Sigmoid colon (tissue), 7 donors: ENCODE measurements at regions of chr2 and their contacts with region 1.

Region 1: GRCh38 chr2:137910641-137911040 is 53.6 kb upstream of the HNMT start:
- DNase-seq: no peak
- H3K4me3 ChIP-seq: no peak overlapping the region
- H3K27ac ChIP-seq: no peak overlapping the region
- H3K4me1 ChIP-seq: no peaks in the 10 kb centered on the region
- H3K27me3 ChIP-seq: no peaks in the 10 kb centered on the region
- CTCF ChIP-seq: peak in 2 of 4 experiments; percentile 42 to 59
- EP300 ChIP-seq: no peak
- POLR2A ChIP-seq: no peak

Region 2: DNA sequence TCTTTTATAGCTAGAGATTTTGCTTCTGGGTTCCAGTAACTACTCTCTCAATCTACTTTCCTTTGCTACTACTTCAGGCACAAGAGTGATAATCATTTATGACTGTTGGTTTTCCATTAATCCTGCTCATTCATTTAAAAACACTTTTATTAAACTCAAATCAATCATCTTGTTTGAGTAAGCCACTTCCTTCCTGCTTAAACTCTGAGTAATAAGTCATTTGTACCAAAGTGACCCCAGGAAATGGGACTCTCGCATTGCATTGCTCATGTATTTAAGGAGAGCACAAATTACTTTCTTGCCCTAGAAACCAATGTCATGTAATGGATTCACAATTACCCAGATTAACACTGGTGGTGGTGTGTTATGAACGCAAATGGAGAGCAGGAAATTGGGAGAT is 217.1 kb before region 1 on chr2:
- intact Hi-C with region 1: no loop called
- DNase-seq: no peak
- H3K4me3 ChIP-seq: no peak overlapping the region
- H3K27ac ChIP-seq: no peak overlapping the region
- H3K4me1 ChIP-seq: no peaks in the 10 kb centered on the region
- H3K27me3 ChIP-seq: no peaks in the 10 kb centered on the region
- CTCF ChIP-seq: no peak
- EP300 ChIP-seq: no peak
- POLR2A ChIP-seq: no peak

Region 3: GRCh38 chr2:137865954-137866540 is 44.6 kb before region 1 on chr2:
- intact Hi-C with region 1: no loop called
- DNase-seq: no peak
- H3K4me3 ChIP-seq: no peak overlapping the region
- H3K27ac ChIP-seq: no peak overlapping the region
- H3K4me1 ChIP-seq: no peaks in the 10 kb centered on the region
- H3K27me3 ChIP-seq: no peaks in the 10 kb centered on the region
- CTCF ChIP-seq: peak in 1 of 4 experiments; percentile 39
- EP300 ChIP-seq: no peak
- POLR2A ChIP-seq: no peak

Region 4: GRCh38 chr2:138373993-138374408 is 463.4 kb after region 1 on chr2:
- intact Hi-C with region 1: loop called (anchors 5 kb)
- DNase-seq: no peak
- H3K4me3 ChIP-seq: no peak overlapping the region
- H3K27ac ChIP-seq: no peak overlapping the region
- H3K4me1 ChIP-seq: no peaks in the 10 kb centered on the region
- H3K27me3 ChIP-seq: no peaks in the 10 kb centered on the region
- CTCF ChIP-seq: peak in 3 of 4 experiments; percentile 14 to 59 (median 43)
- EP300 ChIP-seq: no peak
- POLR2A ChIP-seq: no peak

Region 5: GRCh38 chr2:138787053-138787666 is 876.5 kb after region 1 on chr2:
- intact Hi-C with region 1: loop called (anchors 2 kb)
- DNase-seq: no peak
- H3K4me3 ChIP-seq: no peak overlapping the region
- H3K27ac ChIP-seq: no peak overlapping the region
- H3K4me1 ChIP-seq: no peaks in the 10 kb centered on the region
- H3K27me3 ChIP-seq: no peaks in the 10 kb centered on the region
- CTCF ChIP-seq: peak; percentile 10 to 61 (median 54)
- EP300 ChIP-seq: no peak
- POLR2A ChIP-seq: no peak

Region 6: GRCh38 chr2:138827426-138828054 is 916.9 kb after region 1 on chr2:
- intact Hi-C with region 1: loop called (anchors 2 kb)
- DNase-seq: no peak
- H3K4me3 ChIP-seq: no peak overlapping the region
- H3K27ac ChIP-seq: no peak overlapping the region
- H3K4me1 ChIP-seq: no peaks in the 10 kb centered on the region
- H3K27me3 ChIP-seq: no peaks in the 10 kb centered on the region
- CTCF ChIP-seq: peak; percentile 11 to 77 (median 39)
- EP300 ChIP-seq: no peak
- POLR2A ChIP-seq: no peak